BJ (cell line): ENCODE measurements at regions of chr18 and their contacts with region 1.

Region 1: DNA sequence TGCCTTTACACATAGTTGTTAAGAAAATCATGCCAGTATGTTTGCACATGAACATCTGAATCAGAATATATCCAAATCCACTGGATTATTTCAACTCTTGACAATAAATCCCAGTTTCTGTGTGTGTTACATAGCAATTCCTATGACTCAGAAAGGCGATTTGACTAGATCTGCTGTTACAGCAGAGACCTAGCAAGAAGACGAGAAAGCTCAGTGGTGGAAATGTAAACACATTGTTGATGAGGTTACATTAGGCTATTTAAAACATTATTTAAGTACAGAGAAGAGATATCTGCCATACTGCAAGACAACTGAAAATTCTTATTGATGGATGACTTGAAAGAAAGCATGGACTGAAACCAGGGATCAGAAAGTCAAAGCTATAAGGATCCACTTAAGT is 73.0 kb upstream of the SMIM21 start:
- DNase-seq: no peak
- H3K4me3 ChIP-seq: no peak overlapping the region
- H3K27me3 ChIP-seq: no peaks in the 10 kb centered on the region
- CTCF ChIP-seq: no peak

Region 2: DNA sequence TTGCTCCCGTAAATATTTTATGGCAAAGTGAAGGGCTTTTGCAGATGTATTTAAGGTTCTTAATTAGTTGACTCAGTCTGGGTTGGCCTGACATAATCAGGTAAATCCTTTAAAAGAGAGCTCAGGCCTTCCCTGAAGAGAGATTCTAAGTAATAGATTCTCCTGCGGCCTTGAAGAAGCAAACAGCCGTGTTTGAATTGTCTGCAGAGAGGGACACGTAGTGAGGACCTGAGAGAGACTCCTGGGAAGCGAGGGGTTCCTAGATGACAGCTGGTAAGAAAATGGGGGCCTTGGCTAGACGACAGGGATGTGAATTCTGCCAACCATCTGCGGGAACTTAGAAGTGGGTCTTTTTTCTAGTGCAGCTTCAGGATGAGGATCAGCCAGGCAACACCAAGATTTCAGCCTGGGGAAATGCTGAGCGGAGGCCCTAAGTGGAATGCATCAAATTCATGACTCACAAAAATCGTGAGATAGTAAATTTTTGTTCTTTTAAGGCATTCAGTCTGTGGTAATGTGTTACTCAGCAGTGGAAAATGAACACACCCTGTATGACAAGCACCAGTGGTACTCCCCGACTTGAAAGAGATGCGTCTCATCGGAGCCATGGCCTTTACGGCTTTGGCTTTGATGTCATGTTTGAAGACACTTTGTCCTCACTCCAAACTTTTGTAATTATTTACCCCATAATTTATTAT is 10.9 kb before region 1 on chr18:
- CTCF ChIA-PET with region 1: no interaction called
- POLR2A ChIA-PET with region 1: interaction called, 20 read pairs
- DNase-seq: peak; percentile 89
- H3K4me3 ChIP-seq: no peak overlapping the region
- H3K27me3 ChIP-seq: no peaks in the 10 kb centered on the region
- CTCF ChIP-seq: no peak

Region 3: GRCh38 chr18:75827751-75828287 is 327.3 kb after region 1 on chr18:
- CTCF ChIA-PET with region 1: no interaction called
- POLR2A ChIA-PET with region 1: no interaction called
- DNase-seq: no peak
- H3K4me3 ChIP-seq: no peak overlapping the region
- H3K27me3 ChIP-seq: no peaks in the 10 kb centered on the region
- CTCF ChIP-seq: no peak